Sigmoid colon (tissue), 7 donors: ENCODE measurements at regions of chr14 and their contacts with region 1.

Region 1: DNA sequence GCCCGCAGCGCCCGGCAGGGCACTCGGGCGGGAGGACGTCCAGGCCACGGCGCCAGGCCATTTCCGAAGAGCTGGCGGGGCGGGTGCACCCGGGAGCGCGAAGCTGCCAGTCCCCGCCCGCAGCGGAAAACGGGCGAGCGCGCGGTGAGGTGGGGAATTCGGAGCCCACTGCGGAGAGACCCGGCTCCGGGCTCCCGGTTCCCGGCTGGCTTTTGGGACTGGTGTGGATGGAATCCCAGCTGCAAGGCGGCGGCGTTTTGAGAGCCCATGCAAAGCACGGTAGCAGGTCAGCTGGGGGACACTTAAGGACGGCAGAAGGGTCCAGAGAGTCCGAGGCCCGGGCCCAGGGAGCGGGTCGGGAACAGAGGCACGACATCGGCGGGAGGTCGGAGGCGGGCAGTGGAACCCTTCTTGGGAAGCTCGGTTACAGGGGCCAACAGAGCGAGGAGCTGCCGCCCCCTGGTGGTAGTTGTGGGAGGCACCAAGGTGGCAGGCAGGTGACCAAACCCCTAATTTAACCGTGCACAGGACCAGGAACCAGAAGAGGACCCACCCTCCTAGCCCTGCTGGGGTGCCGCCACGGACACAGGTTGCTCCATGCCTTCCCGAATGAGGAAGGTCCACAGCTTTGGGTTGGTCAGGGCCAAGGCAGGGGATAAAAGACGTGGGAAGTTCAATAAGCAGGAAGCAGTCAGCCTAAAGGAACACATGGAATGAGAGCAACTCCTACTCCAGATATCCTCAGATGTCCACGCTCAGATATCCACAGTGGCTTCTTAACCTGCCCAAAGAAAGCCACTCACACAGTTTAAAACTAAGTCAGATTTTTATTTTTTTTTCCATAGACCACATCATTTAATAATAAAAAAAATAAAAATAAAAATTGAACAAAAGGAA is 685 bp upstream of the CDH24 start:
- DNase-seq: peak; percentile 94
- H3K4me3 ChIP-seq: peak overlapping the region; percentile 48 to 77 (median 68)
- H3K27ac ChIP-seq: peak overlapping the region; percentile 80 to 91 (median 84)
- H3K4me1 ChIP-seq: peaks cover 0 to 35% (median 29%) of the 10 kb centered on the region in 4 donors
- H3K27me3 ChIP-seq: no peaks in the 10 kb centered on the region
- CTCF ChIP-seq: peak; percentile 89 to 96 (median 94)
- EP300 ChIP-seq: no peak
- POLR2A ChIP-seq: no peak

Region 2: GRCh38 chr14:22986508-22987054 is 71.4 kb before region 1 on chr14:
- intact Hi-C with region 1: loop called (anchors 1 kb)
- DNase-seq: peak; percentile 94
- H3K4me3 ChIP-seq: no peak overlapping the region
- H3K27ac ChIP-seq: no peak overlapping the region
- H3K4me1 ChIP-seq: peaks cover 0 to 17% (median 5%) of the 10 kb centered on the region in 4 donors
- H3K27me3 ChIP-seq: peaks cover 0 to 1% (median 0%) of the 10 kb centered on the region in 3 donors
- CTCF ChIP-seq: peak; percentile 67 to 91 (median 90)
- EP300 ChIP-seq: no peak
- POLR2A ChIP-seq: no peak

Region 3: GRCh38 chr14:23160924-23161538 is 103.0 kb after region 1 on chr14:
- intact Hi-C with region 1: no loop called
- DNase-seq: no peak
- H3K4me3 ChIP-seq: no peak overlapping the region
- H3K27ac ChIP-seq: peak overlapping the region in 2 of 4 donors; percentile 28 to 47
- H3K4me1 ChIP-seq: peaks cover 0 to 9% (median 1%) of the 10 kb centered on the region in 4 donors
- H3K27me3 ChIP-seq: no peaks in the 10 kb centered on the region
- CTCF ChIP-seq: no peak
- EP300 ChIP-seq: no peak
- POLR2A ChIP-seq: no peak